Common myeloid progenitor, CD34-positive (primary cell): ENCODE measurements at regions of chr12 and their contacts with region 1.

Region 1: GRCh38 chr12:51980051-51980808 is 26.5 kb upstream of the TAMALIN start:
- DNase-seq: peak; percentile 67 to 84 (median 80)
- H3K4me3 ChIP-seq: no peak overlapping the region
- H3K27ac ChIP-seq: no peak overlapping the region
- H3K4me1 ChIP-seq: peaks cover 3 to 29% (median 7%) of the 10 kb centered on the region in 4 experiments
- H3K27me3 ChIP-seq: no peaks in the 10 kb centered on the region

Region 2: GRCh38 chr12:51886021-51886322 is 94.3 kb before region 1 on chr12:
- CTCF ChIA-PET with region 1: interaction called, 10 read pairs
- POLR2A ChIA-PET with region 1: interaction called, 3 read pairs
- DNase-seq: peak; percentile 80 to 91 (median 89)
- H3K4me3 ChIP-seq: peak overlapping the region in 4 of 7 experiments; percentile 6 to 40 (median 23)
- H3K27ac ChIP-seq: peak overlapping the region in 1 of 2 experiments; percentile 43
- H3K4me1 ChIP-seq: peaks cover 8 to 20% (median 15%) of the 10 kb centered on the region in 4 experiments
- H3K27me3 ChIP-seq: no peaks in the 10 kb centered on the region

Region 3: DNA sequence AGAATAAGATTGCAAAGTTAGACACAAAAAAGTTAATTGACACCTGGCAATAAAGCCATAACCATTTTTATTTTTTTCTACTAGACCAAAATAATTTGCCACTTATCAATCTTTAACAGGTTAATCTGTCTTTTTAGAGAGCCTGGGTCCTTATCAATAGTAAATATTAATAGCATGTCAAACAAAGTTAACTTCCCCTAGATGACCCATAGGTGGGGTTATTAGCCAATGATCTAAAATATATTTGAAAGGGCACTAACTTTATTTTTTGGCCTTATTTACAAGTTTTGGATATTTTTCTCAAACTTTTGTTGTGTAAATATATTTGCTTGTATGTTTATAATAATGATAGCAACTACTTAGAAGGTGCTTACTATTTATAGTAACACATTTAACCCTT is 88.4 kb before region 1 on chr12:
- CTCF ChIA-PET with region 1: interaction called, 20 read pairs
- POLR2A ChIA-PET with region 1: interaction called, 3 read pairs
- DNase-seq: peak in 1 of 3 donors; percentile 15
- H3K4me3 ChIP-seq: no peak overlapping the region
- H3K27ac ChIP-seq: no peak overlapping the region
- H3K4me1 ChIP-seq: peaks cover 0 to 6% (median 3%) of the 10 kb centered on the region in 4 experiments
- H3K27me3 ChIP-seq: no peaks in the 10 kb centered on the region

Region 4: GRCh38 chr12:51898937-51899336 is 81.3 kb before region 1 on chr12:
- CTCF ChIA-PET with region 1: interaction called, 20 read pairs
- POLR2A ChIA-PET with region 1: no interaction called
- DNase-seq: no peak
- H3K4me3 ChIP-seq: no peak overlapping the region
- H3K27ac ChIP-seq: no peak overlapping the region
- H3K4me1 ChIP-seq: peaks cover 0 to 4% (median 0%) of the 10 kb centered on the region in 4 experiments
- H3K27me3 ChIP-seq: no peaks in the 10 kb centered on the region

Region 5: DNA sequence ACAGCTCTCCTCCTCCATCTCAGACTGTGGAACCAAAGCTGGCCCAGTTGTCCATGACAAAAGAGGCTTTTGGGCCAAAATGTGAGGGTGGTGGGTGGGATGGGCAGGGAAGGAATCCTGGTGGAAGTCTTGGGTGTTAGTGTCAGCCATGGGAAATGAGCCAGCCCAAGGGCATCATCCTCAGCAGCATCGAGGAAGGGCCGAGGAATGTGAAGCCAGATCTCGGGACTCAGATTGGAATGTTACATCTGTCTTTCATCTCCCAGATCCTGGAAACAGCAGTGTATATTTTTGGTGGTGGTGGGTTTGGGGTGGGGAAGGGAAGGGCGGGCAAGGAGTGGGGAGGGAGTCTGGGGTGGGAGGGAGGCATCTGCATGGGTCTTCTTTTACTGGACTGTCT is 14.7 kb after region 1 on chr12:
- CTCF ChIA-PET with region 1: interaction called, 46 read pairs
- POLR2A ChIA-PET with region 1: no interaction called
- DNase-seq: no peak
- H3K4me3 ChIP-seq: no peak overlapping the region
- H3K27ac ChIP-seq: no peak overlapping the region
- H3K4me1 ChIP-seq: peaks cover 0 to 6% (median 0%) of the 10 kb centered on the region in 4 experiments
- H3K27me3 ChIP-seq: no peaks in the 10 kb centered on the region

Region 6: DNA sequence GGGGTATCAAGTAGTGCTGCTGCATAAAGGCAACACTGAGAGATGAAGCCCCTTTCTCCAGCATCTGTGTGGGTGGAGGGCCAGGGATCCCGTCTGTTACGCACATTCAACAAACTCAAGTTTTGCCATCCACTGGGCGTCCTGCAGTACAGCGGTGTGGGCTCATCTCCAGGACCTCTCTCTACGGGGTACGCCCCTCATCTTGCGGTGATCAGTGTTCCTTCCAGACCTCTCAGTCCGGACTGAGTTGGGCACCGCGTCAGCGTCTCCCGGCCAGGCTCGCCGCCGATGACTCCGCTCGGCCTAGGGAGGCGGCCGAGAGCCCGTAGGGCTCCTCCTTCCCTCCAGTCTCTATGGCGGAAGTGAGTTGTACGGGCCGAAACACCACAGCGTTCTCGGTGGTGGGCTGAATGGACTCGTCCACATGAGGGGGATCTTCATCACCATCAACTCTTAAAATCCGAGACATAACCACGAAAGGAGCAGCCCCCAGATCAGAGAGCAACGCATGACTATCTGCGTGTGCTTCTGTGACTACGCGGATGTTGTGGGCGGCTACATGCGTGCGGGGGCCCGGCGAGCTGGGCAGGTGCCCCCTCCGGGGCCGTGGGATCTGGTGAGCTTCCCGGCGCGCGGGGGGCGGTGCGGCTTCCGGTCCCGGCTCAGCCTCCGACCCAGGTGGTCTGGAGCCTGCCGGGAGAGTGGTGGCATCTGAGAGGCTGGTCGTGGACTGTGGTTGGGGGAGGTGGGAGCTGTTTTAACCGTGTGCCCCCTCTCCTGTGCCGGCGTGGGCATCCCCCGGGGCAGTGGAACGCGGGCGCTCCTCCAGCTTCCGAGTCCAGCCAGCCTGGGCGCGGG is 89.3 kb after region 1 on chr12 and contains the start of gene ATG101:
- CTCF ChIA-PET with region 1: no interaction called
- POLR2A ChIA-PET with region 1: no interaction called
- DNase-seq: peak; percentile 96 to 98 (median 97)
- H3K4me3 ChIP-seq: peak within 1 kb of the TSS; percentile 69 to 99 (median 93)
- H3K27ac ChIP-seq: peak within 1 kb of the TSS; percentile 95 to 98
- H3K4me1 ChIP-seq: peaks cover 4 to 19% (median 18%) of the 10 kb centered on the region in 4 experiments
- H3K27me3 ChIP-seq: no peaks in the 10 kb centered on the region

Region 7: DNA sequence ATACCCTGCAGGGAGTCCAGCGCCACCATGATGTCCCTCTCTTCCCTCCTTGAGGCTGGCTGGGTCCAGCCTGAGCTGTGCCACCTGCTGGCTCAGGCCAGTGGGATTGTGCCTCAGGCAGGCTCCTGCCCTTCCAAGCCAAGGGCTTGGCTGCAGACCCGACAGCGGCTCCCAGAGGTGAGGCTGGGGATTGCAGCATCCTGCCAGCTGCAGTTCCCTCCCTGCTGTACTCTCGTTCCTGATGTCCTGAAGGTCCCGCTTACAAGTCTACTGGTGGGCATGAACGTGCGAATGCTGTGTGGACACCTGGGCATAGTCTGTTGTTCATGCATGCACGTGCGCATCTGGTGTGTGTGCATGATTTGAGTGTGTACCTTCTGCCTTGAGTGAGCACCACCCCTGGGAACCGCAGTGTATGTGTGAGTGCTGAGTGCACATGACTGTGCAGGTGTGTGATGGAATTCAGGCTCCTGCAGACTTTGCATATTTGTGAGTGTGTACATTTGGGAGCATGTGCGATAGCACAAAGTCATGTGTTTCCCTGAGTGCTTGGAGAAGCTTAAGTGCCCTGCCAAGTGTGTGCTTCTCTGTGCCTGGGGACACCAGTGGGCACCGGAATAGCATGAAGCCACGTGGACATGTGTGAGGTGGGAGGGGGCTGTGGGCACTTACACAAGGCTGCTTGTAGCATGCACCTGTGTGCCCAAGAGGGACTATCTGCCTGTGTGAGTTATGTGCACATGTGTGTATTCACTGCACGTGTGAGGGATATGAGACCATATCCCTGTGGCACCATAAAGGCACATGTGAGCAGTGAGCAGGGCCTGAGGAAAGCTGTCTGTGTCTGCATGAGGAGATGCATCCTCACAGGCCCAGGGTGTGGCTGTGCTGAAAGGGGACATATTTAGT is 233.5 kb after region 1 on chr12:
- CTCF ChIA-PET with region 1: no interaction called
- POLR2A ChIA-PET with region 1: no interaction called
- DNase-seq: peak; percentile 61 to 78 (median 67)
- H3K4me3 ChIP-seq: no peak overlapping the region
- H3K27ac ChIP-seq: no peak overlapping the region
- H3K4me1 ChIP-seq: no peaks in the 10 kb centered on the region
- H3K27me3 ChIP-seq: peaks cover 0 to 7% (median 0%) of the 10 kb centered on the region in 5 experiments